Posterior cingulate gyrus (tissue), 11 donors: ENCODE measurements at regions of chrX and their contacts with region 1.

Region 1: GRCh38 chrX:30504309-30504708 is 73.3 kb downstream of the TASL start:
- DNase-seq: no peak

Region 2: GRCh38 chrX:30275498-30275897 is 228.8 kb before region 1 on chrX:
- intact Hi-C with region 1: loop called (anchors 5 kb)
- DNase-seq: no peak

Region 3: DNA sequence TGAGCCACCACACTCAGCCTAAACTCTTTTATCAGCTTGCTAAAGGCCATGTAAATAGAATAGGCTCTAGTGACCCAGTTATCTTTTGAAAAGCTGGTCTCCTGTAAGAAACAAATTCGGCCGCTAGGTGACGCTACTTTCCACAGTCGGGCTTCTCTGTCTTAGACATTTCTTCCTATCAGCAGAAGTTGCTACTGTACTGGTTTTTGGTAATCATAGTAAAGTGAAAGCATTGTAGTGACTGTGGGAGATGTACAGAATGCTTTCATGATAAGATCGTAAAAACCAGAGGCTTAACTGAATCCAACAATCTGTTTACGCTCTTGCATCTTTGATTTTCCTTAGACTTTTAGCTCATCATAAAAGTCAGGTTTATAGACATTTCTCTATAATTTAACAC is 231.5 kb after region 1 on chrX:
- intact Hi-C with region 1: no loop called
- DNase-seq: peak in 6 of 10 donors; percentile 17 to 89 (median 46)

Region 4: GRCh38 chrX:30876367-30876766 is 372.1 kb after region 1 on chrX:
- intact Hi-C with region 1: no loop called
- DNase-seq: no peak